ENCODE measurements at regions of chr11 and their contacts with region 1.

Region 1: GRCh38 chr11:1572197-1573076 is at the start of gene DUSP8:
- DNase-seq: peak; percentile 96
- ATAC-seq: peak; percentile 64
- H3K4me3 Mint-ChIP-seq: peak within 1 kb of the TSS; percentile 51
- H3K27ac Mint-ChIP-seq: no peak within 1 kb of the TSS
- H3K4me1 Mint-ChIP-seq: peaks cover 9% of the 10 kb centered on the region
- H3K27me3 Mint-ChIP-seq: peaks cover 2% of the 10 kb centered on the region
- total RNA-seq, gene DUSP8: 1.3 to 2.8 TPM

Region 2: DNA sequence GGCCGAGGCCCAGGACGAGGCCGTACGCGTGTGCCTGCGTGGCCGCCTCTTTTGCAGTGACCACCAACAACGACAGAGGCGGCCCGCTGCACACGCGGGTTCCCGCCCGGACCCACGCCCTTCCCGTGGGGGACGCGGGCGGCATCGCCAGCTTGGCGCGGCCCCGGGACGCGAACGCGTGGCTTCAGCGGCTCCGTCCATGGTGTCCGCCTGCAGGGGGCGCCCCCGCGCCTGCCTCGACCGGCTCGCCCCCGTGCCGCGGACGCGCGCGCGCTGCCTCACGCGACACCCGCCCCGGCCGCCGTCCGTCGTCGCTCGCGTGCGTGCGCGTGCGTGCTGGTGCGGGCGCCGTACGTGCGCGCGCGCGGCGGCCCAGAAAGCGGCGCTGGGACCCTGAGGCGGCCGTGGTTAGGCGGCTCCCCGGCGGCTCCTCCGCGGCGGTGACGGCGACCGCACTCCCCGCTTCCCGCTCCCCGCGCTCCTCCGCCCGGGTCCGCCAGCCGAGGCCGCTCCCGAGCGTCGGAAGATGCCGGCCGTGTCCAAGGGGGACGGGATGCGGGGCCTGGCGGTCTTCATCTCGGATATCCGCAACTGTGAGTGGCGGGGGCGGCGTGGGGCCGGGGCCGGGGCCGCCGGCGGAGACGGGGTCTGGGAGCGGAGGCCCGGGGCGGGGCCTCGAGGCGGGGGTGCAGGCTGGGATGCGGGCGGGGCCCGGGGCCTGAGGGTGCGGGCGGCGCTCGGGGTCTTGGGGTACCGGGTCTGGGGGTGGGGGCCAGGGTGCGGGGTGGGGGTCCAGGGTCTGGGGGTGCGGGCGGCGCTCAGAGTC is 646.7 kb before region 1 on chr11 and contains the start of gene AP2A2:
- CTCF ChIA-PET with region 1: no interaction called
- POLR2A ChIA-PET with region 1: no interaction called
- intact Hi-C with region 1: loop called in 1 of 2 experiments (anchors 5 kb)
- DNase-seq: peak; percentile 96
- ATAC-seq: peak; percentile 65
- H3K4me3 Mint-ChIP-seq: peak within 1 kb of the TSS; percentile 80
- H3K27ac Mint-ChIP-seq: peak within 1 kb of the TSS; percentile 86
- H3K4me1 Mint-ChIP-seq: peaks cover 33% of the 10 kb centered on the region
- H3K27me3 Mint-ChIP-seq: no peaks in the 10 kb centered on the region
- total RNA-seq, gene AP2A2: 43.5 to 71.6 TPM

Region 3: GRCh38 chr11:1083621-1084551 is 488.6 kb before region 1 on chr11:
- CTCF ChIA-PET with region 1: no interaction called
- POLR2A ChIA-PET with region 1: no interaction called
- intact Hi-C with region 1: no loop called
- DNase-seq: no peak
- ATAC-seq: no peak
- H3K4me3 Mint-ChIP-seq: no peak overlapping the region
- H3K27ac Mint-ChIP-seq: no peak overlapping the region
- H3K4me1 Mint-ChIP-seq: no peaks in the 10 kb centered on the region
- H3K27me3 Mint-ChIP-seq: no peaks in the 10 kb centered on the region

Region 4: DNA sequence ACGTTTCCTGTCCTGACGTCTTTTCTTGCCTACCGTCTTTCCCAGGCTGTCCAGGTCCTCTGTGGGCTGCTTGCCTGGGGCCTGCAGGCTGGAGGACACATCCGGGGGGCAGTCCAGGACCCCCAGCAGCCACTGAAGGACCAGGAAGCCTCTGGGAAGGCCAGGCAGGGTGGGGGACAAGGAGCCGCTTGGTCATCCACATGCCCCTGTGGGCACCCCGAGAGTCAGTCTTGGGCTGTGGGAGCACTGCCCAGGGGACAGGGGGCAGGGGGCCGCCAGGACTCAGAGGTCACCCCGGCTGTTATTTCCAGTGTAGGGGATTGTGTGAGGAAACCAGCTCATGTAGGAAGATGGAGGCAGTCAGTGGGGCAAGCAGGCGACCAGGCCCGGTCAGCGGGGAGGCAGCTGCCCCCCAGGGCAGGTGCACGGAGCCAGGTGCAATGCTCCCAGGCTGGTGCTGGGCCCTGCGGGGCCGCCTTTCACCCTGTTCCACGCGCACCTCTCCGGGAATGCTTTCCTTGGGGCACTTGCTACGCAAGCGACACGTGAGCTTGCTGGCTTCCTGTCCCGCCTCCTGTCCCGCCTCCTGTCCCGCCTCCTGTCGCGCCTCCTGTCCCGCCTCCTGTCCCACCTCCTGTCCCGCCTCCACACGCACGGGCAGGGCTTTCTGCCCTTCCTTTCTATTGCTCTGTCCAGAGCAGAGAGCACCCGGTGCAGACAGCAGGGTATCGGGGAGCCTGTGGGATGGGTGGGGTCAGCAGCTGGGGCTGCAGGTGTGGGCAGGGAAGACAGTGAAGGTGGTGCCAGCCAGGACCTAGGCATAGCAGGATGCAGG is 310.0 kb before region 1 on chr11:
- CTCF ChIA-PET with region 1: interaction called, 3 read pairs
- POLR2A ChIA-PET with region 1: no interaction called
- intact Hi-C with region 1: loop called (anchors 1 to 10 kb)
- DNase-seq: peak; percentile 96
- ATAC-seq: peak; percentile 84
- H3K4me3 Mint-ChIP-seq: peak overlapping the region; percentile 70
- H3K27ac Mint-ChIP-seq: peak overlapping the region; percentile 84
- H3K4me1 Mint-ChIP-seq: peaks cover 14% of the 10 kb centered on the region
- H3K27me3 Mint-ChIP-seq: no peaks in the 10 kb centered on the region

Region 5: DNA sequence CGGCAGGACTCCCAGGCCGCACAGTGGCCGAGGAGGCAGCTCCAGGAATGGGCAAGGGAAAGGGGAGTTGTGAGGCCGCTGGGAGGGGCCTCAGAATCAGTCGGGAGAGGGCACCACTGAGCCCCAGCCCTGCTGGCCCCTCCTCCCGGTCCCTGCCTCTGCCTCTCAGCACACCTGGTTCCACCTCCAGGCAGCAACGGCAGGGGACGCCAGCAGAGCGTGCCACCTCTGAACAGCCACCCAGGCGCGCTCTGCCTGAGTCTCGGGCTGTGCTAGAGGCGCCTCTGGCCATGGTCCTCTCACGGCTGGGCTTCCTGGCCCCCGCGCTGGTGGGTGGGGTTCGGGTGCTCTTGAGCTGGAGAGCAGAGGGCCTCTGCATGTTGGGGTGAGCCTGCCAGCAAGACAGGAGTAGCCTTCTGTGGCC is 118.8 kb before region 1 on chr11:
- CTCF ChIA-PET with region 1: no interaction called
- POLR2A ChIA-PET with region 1: no interaction called
- intact Hi-C with region 1: loop called (anchors 1 to 5 kb)
- DNase-seq: peak; percentile 85
- ATAC-seq: peak; percentile 97
- H3K4me3 Mint-ChIP-seq: no peak overlapping the region
- H3K27ac Mint-ChIP-seq: no peak overlapping the region
- H3K4me1 Mint-ChIP-seq: no peaks in the 10 kb centered on the region
- H3K27me3 Mint-ChIP-seq: no peaks in the 10 kb centered on the region

Region 6: GRCh38 chr11:1546536-1547400 is 25.7 kb before region 1 on chr11:
- CTCF ChIA-PET with region 1: interaction called, 46 read pairs
- POLR2A ChIA-PET with region 1: no interaction called
- intact Hi-C with region 1: loop called (anchors 1 kb)
- DNase-seq: peak; percentile 72
- ATAC-seq: peak; percentile 87
- H3K4me3 Mint-ChIP-seq: peak overlapping the region; percentile 17
- H3K27ac Mint-ChIP-seq: no peak overlapping the region
- H3K4me1 Mint-ChIP-seq: peaks cover 2% of the 10 kb centered on the region
- H3K27me3 Mint-ChIP-seq: peaks cover 23% of the 10 kb centered on the region

Region 7: GRCh38 chr11:1763796-1764661 is 191.6 kb after region 1 on chr11 and contains the start of gene CTSD:
- CTCF ChIA-PET with region 1: no interaction called
- POLR2A ChIA-PET with region 1: no interaction called
- intact Hi-C with region 1: loop called in 1 of 2 experiments (anchors 1 kb)
- DNase-seq: peak; percentile 94
- ATAC-seq: peak; percentile 91
- H3K4me3 Mint-ChIP-seq: peak within 1 kb of the TSS; percentile 83
- H3K27ac Mint-ChIP-seq: peak within 1 kb of the TSS; percentile 58
- H3K4me1 Mint-ChIP-seq: peaks cover 35% of the 10 kb centered on the region
- H3K27me3 Mint-ChIP-seq: no peaks in the 10 kb centered on the region
- total RNA-seq, gene CTSD: 38.8 to 41.5 TPM

Measured in activated CD4-positive, alpha-beta T cell treated with anti-CD3 and anti-CD28 coated beads for 36 hours (primary cell).